Posterior vena cava (tissue), 2 donors: ENCODE measurements at regions of chr12 and their contacts with region 1.

Region 1: GRCh38 chr12:121888478-121889266 is at the start of gene PSMD9:
- DNase-seq: peak; percentile 99
- total RNA-seq, gene PSMD9: 37.9 to 42.1 TPM

Region 2: DNA sequence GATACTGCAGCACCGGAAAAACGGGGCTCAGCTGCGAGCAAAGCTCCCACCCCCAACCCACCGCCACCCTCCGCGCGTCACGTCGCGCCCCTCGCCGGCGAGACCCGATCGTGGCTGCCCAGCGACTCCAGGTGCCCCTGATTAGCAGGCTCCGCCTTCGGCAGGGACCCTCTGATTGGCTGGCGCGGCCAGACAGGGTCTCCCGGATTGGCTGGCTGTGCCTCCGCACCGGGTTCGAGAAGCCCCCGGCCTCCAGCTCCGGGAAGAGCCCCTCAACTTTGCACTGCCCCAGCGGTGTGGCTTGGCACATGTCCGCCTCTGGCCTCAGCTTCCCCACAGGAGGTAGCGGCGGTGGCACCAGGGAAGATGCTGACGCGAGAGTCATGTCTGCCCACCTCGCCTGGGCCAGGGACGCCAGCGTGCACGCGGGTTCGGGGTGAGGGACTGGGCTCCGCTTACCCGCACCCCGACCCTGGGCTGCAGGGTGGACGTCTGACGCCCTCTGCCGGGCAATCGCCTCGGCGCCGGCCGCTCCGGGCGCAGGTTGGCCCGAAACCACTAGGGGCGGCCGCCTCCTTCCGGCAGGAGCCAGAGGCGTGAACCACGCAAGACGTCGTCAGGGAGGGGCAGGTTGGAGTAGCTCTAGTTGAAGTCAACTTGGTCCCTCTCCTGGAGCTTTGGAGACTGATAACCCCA is 94.7 kb before region 1 on chr12:
- intact Hi-C with region 1: loop called (anchors 2 to 5 kb)
- DNase-seq: peak; percentile 98

Region 3: DNA sequence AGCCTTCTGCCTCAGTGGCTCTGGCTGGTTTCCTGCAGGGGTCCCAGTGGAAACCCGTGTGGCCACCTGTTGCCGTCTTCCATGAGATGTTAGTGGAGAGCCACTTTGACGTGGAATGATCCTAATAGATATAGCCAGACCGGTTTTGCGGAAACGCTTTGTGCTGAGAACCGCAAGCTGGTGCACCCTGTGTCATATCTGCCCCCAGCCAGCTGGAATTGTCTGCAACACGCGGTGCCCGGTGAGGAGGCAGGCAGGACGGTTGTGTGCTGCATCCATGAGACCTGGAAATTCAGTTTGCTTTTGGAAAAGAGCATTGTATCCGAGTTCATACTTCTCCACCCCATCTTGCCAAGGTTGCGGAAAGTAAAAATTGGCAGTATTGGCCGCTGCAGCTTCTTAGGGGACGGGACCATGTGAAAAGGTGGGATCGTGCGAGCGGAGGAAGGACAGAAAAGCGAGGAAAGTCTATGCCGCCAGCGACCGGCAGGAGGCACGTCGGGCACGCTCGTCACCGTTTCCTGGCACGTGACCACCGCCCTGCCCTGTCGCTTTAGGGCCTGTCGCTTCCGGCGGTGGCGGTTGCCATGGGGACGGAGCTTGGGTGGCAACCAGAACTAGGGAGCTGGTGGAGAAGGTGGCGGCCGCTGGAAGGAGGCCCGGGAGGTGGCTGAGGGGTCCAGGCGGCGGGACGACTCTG is 29.5 kb after region 1 on chr12 and contains the start of gene CFAP251:
- intact Hi-C with region 1: no loop called
- DNase-seq: peak; percentile 98
- total RNA-seq, gene CFAP251: 0.65 to 1.9 TPM